Right lobe of liver (tissue), 6 donors: ENCODE measurements at regions of chr15 and their contacts with region 1.

Region 1: DNA sequence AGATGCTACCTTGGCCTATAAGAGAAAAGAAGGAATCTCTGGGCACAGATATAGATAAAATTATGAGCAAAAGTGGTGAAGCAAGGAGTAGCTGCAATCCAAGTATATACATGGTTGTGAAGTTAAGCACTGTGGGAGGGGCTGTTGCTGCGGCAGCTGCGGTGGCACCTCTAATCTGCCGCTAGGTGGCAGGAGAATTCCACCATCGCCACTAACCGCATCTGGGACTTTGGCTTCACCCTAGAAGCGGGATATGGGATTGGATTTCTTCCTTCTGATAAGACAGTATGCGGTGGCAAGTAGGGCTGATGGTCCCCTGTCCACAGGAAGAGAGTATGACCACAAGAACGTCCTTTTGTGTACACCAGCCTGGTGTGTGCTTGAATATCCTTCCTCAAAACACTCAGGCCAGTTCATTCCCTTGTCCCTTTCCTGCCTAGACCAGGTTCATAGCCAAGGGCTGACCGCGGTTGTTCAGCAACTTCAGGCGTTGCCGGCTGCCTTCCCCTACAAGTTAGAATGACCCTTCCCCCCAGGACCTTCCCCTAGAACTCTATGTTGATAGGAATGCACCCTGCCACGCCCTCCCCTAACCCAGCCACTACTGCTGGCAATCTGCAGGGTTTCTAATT is 5.1 kb downstream of the MAGEL2 start:
- DNase-seq: peak in 2 of 3 donors; percentile 56 to 61
- ATAC-seq: peak; percentile 82 to 91 (median 86)
- H3K4me3 ChIP-seq: no peak overlapping the region
- H3K27ac ChIP-seq: no peak overlapping the region
- H3K4me1 ChIP-seq: no peaks in the 10 kb centered on the region
- H3K27me3 ChIP-seq: no peaks in the 10 kb centered on the region
- CTCF ChIP-seq: peak; percentile 68 to 96 (median 90)
- POLR2A ChIP-seq: no peak

Region 2: DNA sequence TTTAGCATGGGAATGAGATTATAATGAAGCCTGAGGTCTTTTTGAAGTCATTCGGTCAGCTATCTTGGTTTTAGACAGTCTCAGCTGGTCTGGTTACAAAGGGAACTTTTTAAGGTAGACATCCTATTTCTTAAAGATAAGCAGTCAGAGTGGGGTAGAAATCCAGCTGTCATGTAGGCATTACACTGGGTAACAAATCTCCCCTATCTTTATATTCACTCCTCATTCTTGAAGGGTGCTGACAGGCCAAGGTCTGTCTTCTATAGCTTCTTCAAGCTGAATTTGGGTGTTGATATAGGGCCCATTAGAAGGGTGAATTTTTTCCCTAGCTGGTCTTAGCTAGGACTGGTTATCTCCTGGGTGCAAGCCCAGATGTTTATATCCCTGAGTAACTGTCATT is 65.8 kb after region 1 on chr15:
- intact Hi-C with region 1: no loop called
- DNase-seq: no peak
- ATAC-seq: no peak
- H3K4me3 ChIP-seq: no peak overlapping the region
- H3K27ac ChIP-seq: no peak overlapping the region
- H3K4me1 ChIP-seq: no peaks in the 10 kb centered on the region
- H3K27me3 ChIP-seq: no peaks in the 10 kb centered on the region
- CTCF ChIP-seq: no peak
- POLR2A ChIP-seq: no peak

Region 3: GRCh38 chr15:23877502-23878412 is 235.2 kb after region 1 on chr15:
- intact Hi-C with region 1: loop called in 1 of 2 experiments (anchors 10 kb)
- DNase-seq: peak; percentile 46 to 67 (median 52)
- ATAC-seq: peak; percentile 75 to 86 (median 81)
- H3K4me3 ChIP-seq: no peak overlapping the region
- H3K27ac ChIP-seq: no peak overlapping the region
- H3K4me1 ChIP-seq: no peaks in the 10 kb centered on the region
- H3K27me3 ChIP-seq: no peaks in the 10 kb centered on the region
- CTCF ChIP-seq: peak in 3 of 4 donors; percentile 49 to 61 (median 55)
- POLR2A ChIP-seq: no peak